MCF 10A (cell line): ENCODE measurements at regions of chr2 and their contacts with region 1.

Region 1: DNA sequence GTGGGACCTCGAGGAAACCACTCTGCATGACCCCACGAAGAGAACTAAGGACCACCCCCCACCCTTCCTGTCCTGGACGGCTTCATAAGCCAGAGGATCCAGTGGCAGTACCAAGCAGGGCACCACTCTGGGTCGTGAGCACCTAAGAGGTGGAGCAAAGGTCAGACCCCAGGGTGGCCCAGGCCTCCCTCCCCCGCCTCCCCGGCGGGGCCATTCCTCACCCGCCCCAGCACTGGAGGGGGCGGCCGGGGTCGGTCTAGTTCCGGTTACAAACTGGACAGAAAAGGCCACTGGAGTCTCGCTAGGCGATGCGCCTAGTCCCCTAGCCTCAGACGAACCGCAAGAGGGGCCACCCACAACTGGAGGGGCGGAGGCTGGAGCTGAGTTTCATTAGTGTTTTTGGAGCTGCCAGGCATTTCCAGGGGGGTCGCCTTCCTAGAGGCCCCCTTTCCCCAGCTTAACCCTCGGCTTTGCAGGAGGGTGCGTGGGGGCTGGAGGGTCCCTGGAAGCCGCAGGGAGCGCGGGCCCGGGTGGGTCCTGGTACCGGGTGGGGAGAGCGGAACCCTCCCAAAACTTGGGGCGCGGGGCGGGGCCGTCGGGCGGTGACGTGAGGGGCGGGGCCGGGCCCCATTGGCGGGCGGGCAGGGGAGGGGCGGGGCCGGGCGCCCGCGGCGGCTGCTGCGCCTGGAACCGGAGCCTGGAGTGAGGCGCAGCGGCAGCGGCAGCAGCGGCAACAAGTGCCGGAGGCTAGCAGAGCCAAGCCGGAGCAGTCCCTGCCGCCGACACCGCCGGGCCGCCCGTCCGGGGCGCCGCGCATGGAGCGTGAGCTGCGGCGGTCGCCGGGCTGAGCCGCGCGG is at the start of gene B3GNT2:
- DNase-seq: peak; percentile 71
- H3K4me3 Mint-ChIP-seq: peak within 1 kb of the TSS; percentile 88
- H3K27ac Mint-ChIP-seq: peak within 1 kb of the TSS; percentile 12
- H3K4me1 Mint-ChIP-seq: peaks cover 20% of the 10 kb centered on the region
- H3K27me3 Mint-ChIP-seq: no peaks in the 10 kb centered on the region
- CTCF ChIP-seq: no peak
- total RNA-seq, gene B3GNT2: 12.3 and 15.3 TPM in 2 replicates

Region 2: GRCh38 chr2:61922714-61923113 is 272.9 kb before region 1 on chr2:
- CTCF ChIA-PET with region 1: no interaction called
- POLR2A ChIA-PET with region 1: no interaction called
- intact Hi-C with region 1: loop called (anchors 2 kb)
- DNase-seq: no peak
- H3K4me3 Mint-ChIP-seq: no peak overlapping the region
- H3K27ac Mint-ChIP-seq: no peak overlapping the region
- H3K4me1 Mint-ChIP-seq: no peaks in the 10 kb centered on the region
- H3K27me3 Mint-ChIP-seq: no peaks in the 10 kb centered on the region
- CTCF ChIP-seq: no peak

Region 3: DNA sequence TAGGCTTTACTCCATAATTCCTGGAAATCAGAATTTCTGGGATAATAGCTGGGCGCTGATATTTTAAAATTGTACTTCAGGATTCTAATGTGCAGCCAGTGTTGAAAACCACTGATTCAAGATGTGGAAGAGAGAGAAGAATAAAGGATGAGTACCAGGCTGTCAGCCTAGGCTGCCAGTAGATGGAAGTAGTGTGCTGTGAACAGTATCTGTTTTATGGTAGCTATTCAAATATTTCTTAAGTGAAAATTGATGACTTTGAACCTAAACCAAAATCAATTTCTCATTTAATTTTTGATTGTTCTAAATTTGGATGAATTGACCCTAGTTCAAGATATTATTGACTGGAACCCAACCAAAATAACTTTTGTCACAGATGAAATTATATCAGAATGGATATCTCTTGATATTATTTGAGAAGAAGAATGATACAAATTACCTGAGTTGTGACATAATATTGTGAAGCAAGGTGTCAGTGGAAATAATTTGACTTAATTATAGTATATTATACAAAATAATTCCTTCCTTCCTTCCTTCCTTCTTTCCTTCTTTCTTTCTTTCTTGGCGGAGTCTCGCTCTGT is 202.1 kb before region 1 on chr2:
- CTCF ChIA-PET with region 1: interaction called, 5 read pairs
- POLR2A ChIA-PET with region 1: no interaction called
- intact Hi-C with region 1: loop called (anchors 5 kb)
- DNase-seq: peak; percentile 54
- H3K4me3 Mint-ChIP-seq: no peak overlapping the region
- H3K27ac Mint-ChIP-seq: no peak overlapping the region
- H3K4me1 Mint-ChIP-seq: no peaks in the 10 kb centered on the region
- H3K27me3 Mint-ChIP-seq: no peaks in the 10 kb centered on the region
- CTCF ChIP-seq: peak; percentile 67

Region 4: GRCh38 chr2:62270728-62271127 is 75.1 kb after region 1 on chr2:
- CTCF ChIA-PET with region 1: no interaction called
- POLR2A ChIA-PET with region 1: no interaction called
- intact Hi-C with region 1: no loop called
- DNase-seq: peak; percentile 51
- H3K4me3 Mint-ChIP-seq: no peak overlapping the region
- H3K27ac Mint-ChIP-seq: no peak overlapping the region
- H3K4me1 Mint-ChIP-seq: no peaks in the 10 kb centered on the region
- H3K27me3 Mint-ChIP-seq: no peaks in the 10 kb centered on the region
- CTCF ChIP-seq: no peak

Region 5: DNA sequence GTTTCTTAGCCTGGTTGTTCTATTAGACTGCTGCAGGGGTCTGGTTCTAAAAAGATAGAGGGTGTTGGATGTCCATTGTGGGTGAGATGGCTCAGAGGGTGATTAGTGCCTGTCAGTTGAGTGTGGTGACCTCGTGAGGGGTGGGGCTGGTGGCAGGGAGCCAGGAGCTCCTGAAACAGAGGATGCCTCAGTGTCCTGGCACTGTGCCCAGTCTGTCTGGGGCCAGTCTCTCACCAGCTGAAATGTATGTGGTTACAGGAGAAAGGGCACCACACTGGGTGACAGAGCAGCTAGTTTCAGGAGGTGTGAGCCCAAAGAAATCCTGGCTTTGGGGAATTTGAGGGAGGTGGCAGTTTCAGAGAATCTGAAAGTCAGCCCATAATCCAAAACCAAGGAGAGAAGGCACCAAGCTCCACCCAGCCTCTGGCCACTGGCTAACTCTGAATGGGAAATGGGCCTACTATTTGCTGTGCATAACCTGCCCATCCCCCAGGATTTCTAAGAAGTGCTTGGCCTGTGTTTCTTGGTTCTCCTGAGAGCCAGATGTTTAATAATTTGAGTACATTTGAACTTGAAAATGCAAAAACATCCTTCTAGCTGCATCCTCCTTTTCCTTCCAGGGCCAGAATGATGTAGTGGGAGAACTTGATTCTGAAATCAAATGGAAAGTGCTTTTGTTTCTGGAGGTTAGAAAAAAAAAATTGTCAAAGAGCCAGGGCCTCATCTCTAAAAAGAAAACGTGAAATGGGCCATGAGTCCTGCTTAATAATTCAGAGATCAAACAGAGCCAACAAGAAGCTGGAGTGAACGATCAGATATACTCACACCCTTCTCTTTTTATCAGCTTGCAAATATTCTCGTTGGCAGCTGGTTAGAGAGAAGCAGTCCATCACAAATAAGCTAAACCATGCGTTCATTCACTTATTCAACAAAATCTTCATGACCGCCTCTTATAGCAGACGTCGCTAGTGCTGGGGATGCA is 92.5 kb after region 1 on chr2:
- CTCF ChIA-PET with region 1: interaction called, 3 read pairs
- POLR2A ChIA-PET with region 1: interaction called, 8 read pairs
- intact Hi-C with region 1: loop called (anchors 2 kb)
- DNase-seq: peak; percentile 92
- H3K4me3 Mint-ChIP-seq: no peak overlapping the region
- H3K27ac Mint-ChIP-seq: no peak overlapping the region
- H3K4me1 Mint-ChIP-seq: peaks cover 17% of the 10 kb centered on the region
- H3K27me3 Mint-ChIP-seq: no peaks in the 10 kb centered on the region
- CTCF ChIP-seq: no peak

Region 6: DNA sequence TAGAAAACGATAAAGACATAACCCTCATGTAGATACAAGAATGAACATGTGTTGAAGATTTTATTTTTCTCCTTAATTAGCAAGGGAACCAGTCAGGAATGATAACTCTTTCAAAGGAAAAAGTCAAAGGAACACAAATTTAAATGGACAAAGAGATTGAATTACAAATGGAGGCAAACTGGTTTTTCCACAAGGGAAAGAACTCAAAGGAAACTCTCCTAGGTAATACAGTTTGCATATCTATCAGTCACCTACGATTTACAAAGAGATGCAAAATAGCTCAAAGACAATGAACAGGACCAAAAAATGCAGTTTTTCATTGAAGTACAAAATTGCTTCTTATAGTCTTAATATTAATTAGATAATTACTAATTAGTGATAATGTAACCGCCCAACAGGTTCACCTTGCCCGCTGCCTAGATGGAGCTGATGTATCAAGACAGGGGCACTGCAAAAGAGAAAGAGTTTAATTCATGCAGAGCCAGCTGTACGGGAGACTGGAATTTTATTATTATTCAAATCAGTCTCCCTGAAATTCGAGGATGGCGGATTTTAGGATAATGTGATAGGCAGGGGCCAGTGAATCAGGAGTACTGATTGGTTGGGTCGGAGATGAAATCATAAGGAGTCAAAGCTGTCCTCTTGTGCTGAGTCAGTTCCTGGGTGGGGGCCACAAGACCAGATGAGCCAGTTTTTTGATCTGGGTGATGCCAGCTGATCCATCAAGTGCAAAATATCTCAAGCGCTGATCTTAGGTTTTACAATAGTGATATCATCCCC is 159.3 kb after region 1 on chr2:
- CTCF ChIA-PET with region 1: no interaction called
- POLR2A ChIA-PET with region 1: no interaction called
- intact Hi-C with region 1: no loop called
- DNase-seq: no peak
- H3K4me3 Mint-ChIP-seq: no peak overlapping the region
- H3K27ac Mint-ChIP-seq: no peak overlapping the region
- H3K4me1 Mint-ChIP-seq: no peaks in the 10 kb centered on the region
- H3K27me3 Mint-ChIP-seq: no peaks in the 10 kb centered on the region
- CTCF ChIP-seq: no peak

Region 7: GRCh38 chr2:62415019-62415431 is 219.4 kb after region 1 on chr2:
- CTCF ChIA-PET with region 1: interaction called, 4 read pairs
- POLR2A ChIA-PET with region 1: interaction called, 6 read pairs
- intact Hi-C with region 1: loop called (anchors 2 kb)
- DNase-seq: no peak
- H3K4me3 Mint-ChIP-seq: no peak overlapping the region
- H3K27ac Mint-ChIP-seq: no peak overlapping the region
- H3K4me1 Mint-ChIP-seq: peaks cover 22% of the 10 kb centered on the region
- H3K27me3 Mint-ChIP-seq: no peaks in the 10 kb centered on the region
- CTCF ChIP-seq: no peak